Tibial artery (tissue), 4 donors: ENCODE measurements at regions of chr12 and their contacts with region 1.

Region 1: DNA sequence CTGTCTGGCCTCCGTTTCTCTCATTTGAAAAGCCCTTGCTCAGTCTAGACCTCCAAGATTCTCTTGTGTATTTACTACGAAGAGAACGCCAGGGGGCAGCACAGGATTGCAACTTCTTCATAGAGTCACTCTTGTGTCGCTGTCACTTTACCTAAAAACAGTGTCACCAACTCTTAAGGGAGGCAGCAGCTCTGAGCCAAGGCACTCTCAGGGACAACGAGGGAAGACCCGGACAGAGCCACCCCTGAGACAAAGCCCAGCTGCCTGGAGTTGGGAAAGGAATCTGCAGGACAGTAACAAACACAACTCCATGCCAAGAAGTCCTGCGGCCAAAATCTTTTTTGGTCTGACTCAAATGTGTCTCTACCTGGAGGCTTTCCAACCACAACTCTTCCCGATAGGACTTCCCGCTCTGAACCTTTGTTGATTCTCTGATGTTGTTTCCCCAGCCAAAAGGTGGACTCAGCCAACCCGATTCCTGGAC is 9.6 kb upstream of the RPAP3 start:
- DNase-seq: peak; percentile 66 to 87
- H3K4me3 ChIP-seq: peak overlapping the region in 1 of 2 donors; percentile 17
- H3K27ac ChIP-seq: peak overlapping the region; percentile 79 to 93
- H3K4me1 ChIP-seq: peaks cover 5 to 39% (median 33%) of the 10 kb centered on the region in 4 donors
- H3K27me3 ChIP-seq: no peaks in the 10 kb centered on the region
- CTCF ChIP-seq: peak; percentile 72 to 93

Region 2: DNA sequence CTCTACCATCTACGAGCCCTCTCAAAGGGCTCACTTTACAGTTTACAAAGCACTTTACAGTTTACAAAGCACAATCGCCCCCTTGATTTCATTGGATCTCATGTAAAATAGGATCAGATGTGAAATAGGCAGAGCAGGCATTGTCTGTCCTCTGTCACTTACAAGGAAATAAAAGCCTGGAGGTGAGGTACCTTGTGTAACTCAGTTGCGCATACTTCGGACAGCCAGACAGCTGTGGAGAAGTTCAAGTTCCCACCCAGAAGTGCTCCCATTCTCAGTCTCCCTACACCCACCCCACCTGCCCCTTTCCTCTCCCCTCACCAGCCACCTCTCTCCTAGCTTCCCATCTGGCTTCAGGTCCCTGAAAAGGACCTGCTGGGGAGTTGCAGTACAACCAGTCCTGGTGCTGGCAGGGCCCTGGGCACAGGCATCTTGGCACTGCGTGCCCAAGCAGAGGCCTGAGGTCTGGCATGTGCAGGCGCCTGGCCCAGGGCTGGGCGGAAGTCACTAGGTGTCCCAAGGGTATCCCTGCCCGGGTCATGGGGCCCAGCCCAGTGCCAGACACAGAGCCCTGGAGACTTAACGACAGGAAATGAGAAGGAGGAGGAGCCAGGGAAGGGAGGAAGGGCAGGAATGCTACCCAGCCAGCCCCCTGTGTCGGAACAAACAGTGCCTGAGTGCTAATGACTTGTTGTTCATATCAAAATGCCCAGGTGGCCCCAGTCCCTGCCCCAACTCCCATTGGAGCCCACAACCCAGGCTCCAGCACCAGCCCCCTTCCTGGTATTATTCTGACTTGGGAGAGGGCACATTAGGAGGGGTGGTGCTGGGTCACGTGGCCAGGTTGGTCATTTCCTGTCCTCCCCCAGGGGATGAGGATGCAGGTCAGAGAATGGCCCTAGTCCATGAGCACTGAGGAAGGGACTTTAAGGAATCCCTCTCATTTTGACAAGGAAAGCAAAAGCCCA is 37.9 kb after region 1 on chr12:
- intact Hi-C with region 1: loop called (anchors 5 kb)
- DNase-seq: peak; percentile 86 to 97
- H3K4me3 ChIP-seq: peak overlapping the region in 1 of 2 donors; percentile 12
- H3K27ac ChIP-seq: peak overlapping the region; percentile 62 to 79
- H3K4me1 ChIP-seq: peaks cover 0 to 72% (median 67%) of the 10 kb centered on the region in 4 donors
- H3K27me3 ChIP-seq: no peaks in the 10 kb centered on the region
- CTCF ChIP-seq: peak; percentile 24 to 44

Region 3: GRCh38 chr12:47773062-47773857 is 57.8 kb after region 1 on chr12 and contains the start of gene SLC48A1:
- intact Hi-C with region 1: loop called (anchors 5 kb)
- DNase-seq: peak in 1 of 2 donors; percentile 87
- H3K4me3 ChIP-seq: peak within 1 kb of the TSS; percentile 74 to 96
- H3K27ac ChIP-seq: peak within 1 kb of the TSS; percentile 80 to 87
- H3K4me1 ChIP-seq: peaks cover 0 to 66% (median 53%) of the 10 kb centered on the region in 4 donors
- H3K27me3 ChIP-seq: no peaks in the 10 kb centered on the region
- CTCF ChIP-seq: peak; percentile 23 to 42

Region 4: GRCh38 chr12:47797441-47797840 is 82.0 kb after region 1 on chr12:
- intact Hi-C with region 1: no loop called
- DNase-seq: no peak
- H3K4me3 ChIP-seq: no peak overlapping the region
- H3K27ac ChIP-seq: peak overlapping the region in 1 of 2 donors; percentile 66
- H3K4me1 ChIP-seq: peaks cover 0 to 47% (median 43%) of the 10 kb centered on the region in 4 donors
- H3K27me3 ChIP-seq: no peaks in the 10 kb centered on the region
- CTCF ChIP-seq: peak in 1 of 2 experiments; percentile 14